Ascending aorta (tissue), 2 donors: ENCODE measurements at regions of chr20 and their contacts with region 1.

Region 1: GRCh38 chr20:51595058-51595532 is 52.6 kb upstream of the NFATC2 start:
- DNase-seq: peak; percentile 74 to 95
- H3K4me3 ChIP-seq: no peak overlapping the region
- H3K27ac ChIP-seq: peak overlapping the region; percentile 6 to 66
- H3K4me1 ChIP-seq: peaks cover 0 to 13% of the 10 kb centered on the region in 2 donors
- H3K27me3 ChIP-seq: no peaks in the 10 kb centered on the region
- CTCF ChIP-seq: peak; percentile 85 to 90 (median 85)

Region 2: GRCh38 chr20:50987592-50988210 is 607.4 kb before region 1 on chr20:
- intact Hi-C with region 1: loop called (anchors 5 kb)
- DNase-seq: peak in 1 of 2 donors; percentile 87
- H3K4me3 ChIP-seq: no peak overlapping the region
- H3K27ac ChIP-seq: no peak overlapping the region
- H3K4me1 ChIP-seq: no peaks in the 10 kb centered on the region
- H3K27me3 ChIP-seq: no peaks in the 10 kb centered on the region
- CTCF ChIP-seq: peak; percentile 81 to 93 (median 87)

Region 3: GRCh38 chr20:51447097-51447771 is 147.9 kb before region 1 on chr20:
- intact Hi-C with region 1: loop called (anchors 10 kb)
- DNase-seq: peak; percentile 33 to 96
- H3K4me3 ChIP-seq: no peak overlapping the region
- H3K27ac ChIP-seq: peak overlapping the region; percentile 8 to 70
- H3K4me1 ChIP-seq: peaks cover 15 to 27% of the 10 kb centered on the region in 2 donors
- H3K27me3 ChIP-seq: no peaks in the 10 kb centered on the region
- CTCF ChIP-seq: no peak

Region 4: GRCh38 chr20:51541189-51542032 is 53.7 kb before region 1 on chr20:
- intact Hi-C with region 1: loop called (anchors 5 kb)
- DNase-seq: peak; percentile 73 to 93
- H3K4me3 ChIP-seq: peak overlapping the region in 1 of 2 donors; percentile 65
- H3K27ac ChIP-seq: peak overlapping the region; percentile 75 to 76
- H3K4me1 ChIP-seq: peaks cover 3 to 15% of the 10 kb centered on the region in 2 donors
- H3K27me3 ChIP-seq: no peaks in the 10 kb centered on the region
- CTCF ChIP-seq: no peak

Region 5: DNA sequence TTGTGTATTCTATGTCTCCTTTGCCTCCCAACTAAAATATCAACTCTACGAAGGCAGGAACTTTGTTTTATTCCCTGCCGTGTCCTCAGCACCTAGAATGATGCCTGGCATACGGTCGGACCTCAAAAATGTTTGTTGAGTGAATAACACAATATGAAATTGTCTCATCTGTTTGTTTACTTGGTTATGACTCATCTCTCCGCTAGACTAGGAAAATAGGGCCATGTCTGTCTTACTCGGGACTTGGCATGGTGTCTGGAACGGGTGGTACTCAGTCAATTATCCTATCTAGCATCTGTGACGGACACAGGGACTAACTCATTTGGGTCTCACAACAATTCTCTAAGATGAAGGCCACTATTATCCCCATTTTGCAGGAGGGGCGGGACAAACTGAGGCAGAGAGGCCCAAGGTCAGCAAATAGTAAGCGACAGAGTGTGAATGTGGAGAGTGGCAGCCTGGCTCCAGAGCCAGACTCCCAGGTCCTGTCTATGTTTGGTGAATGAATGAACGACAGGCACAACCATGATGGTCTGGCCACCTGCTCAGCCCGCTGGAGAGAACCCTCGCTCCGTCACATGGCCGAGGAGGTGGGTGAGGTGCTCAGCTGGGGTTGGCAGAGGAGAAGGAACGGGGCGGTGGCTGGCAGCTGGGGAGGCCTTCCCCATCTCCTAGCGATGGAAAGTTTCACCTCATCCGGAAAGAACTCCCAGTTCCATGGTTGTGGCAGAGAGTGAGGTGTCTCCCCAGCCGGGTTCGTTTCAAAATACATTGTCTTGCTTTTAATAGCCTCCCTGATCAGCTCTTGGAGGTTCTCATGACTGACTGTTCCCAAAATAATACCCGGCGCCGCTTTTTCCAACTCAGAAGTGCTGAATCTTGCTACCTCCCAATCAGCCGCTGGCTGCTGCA is 25.0 kb before region 1 on chr20:
- intact Hi-C with region 1: loop called (anchors 2 kb)
- DNase-seq: peak in 1 of 2 donors; percentile 79
- H3K4me3 ChIP-seq: peak overlapping the region in 1 of 2 donors; percentile 52
- H3K27ac ChIP-seq: peak overlapping the region; percentile 64 to 80
- H3K4me1 ChIP-seq: peaks cover 7 to 14% of the 10 kb centered on the region in 2 donors
- H3K27me3 ChIP-seq: no peaks in the 10 kb centered on the region
- CTCF ChIP-seq: no peak

Region 6: GRCh38 chr20:51876313-51876940 is 281.3 kb after region 1 on chr20:
- intact Hi-C with region 1: no loop called
- DNase-seq: no peak
- H3K4me3 ChIP-seq: no peak overlapping the region
- H3K27ac ChIP-seq: no peak overlapping the region
- H3K4me1 ChIP-seq: no peaks in the 10 kb centered on the region
- H3K27me3 ChIP-seq: no peaks in the 10 kb centered on the region
- CTCF ChIP-seq: no peak